Panc1 (cell line): ENCODE measurements at regions of chr3 and their contacts with region 1.

Region 1: DNA sequence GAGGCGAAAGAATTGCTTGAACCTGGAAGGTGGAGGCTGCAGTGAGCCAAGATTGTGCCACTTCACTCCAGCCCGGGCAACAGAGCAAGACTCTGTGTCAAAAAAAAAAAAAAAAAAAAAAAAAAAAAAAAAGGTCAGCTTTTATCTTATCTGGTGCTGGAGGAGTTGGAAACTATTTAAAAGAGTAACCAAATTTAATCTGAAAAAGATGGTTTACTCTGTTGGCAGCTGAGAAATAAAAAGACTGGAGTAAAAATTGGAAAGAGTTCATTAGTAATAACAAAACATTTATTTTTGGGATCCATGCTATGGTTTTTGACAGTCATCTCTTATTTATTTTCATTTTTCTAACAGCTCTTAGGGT is 332.8 kb downstream of the PTPRG start:
- DNase-seq: no peak
- ATAC-seq: no peak
- H3K4me3 ChIP-seq: no peak overlapping the region
- H3K27ac ChIP-seq: no peak overlapping the region
- H3K4me1 ChIP-seq: no peaks in the 10 kb centered on the region
- H3K27me3 ChIP-seq: no peaks in the 10 kb centered on the region
- CTCF ChIP-seq: no peak

Region 2: DNA sequence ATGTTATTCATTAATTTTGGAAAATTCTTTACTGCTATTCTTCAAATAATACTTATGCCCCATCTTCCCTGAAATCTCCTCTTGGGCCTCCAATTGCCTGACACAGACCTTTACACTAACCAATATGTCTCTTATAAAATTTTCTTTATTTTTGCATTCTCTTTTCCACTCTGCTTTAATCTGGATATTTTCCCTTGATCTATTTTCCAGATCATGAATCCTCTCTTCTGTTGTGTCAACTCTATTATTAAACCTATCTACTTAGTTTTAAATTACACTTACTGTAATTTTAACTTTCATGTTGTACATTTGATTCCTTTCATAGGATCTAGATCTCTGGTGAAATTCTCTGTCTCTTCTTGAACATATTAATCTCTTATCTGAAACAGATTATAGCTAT is 921.6 kb before region 1 on chr3:
- CTCF ChIA-PET with region 1: no interaction called
- POLR2A ChIA-PET with region 1: interaction called, 15 read pairs
- in situ Hi-C with region 1: no loop called
- intact Hi-C with region 1: no loop called
- DNase-seq: no peak
- ATAC-seq: no peak
- H3K4me3 ChIP-seq: no peak overlapping the region
- H3K27ac ChIP-seq: no peak overlapping the region
- H3K4me1 ChIP-seq: no peaks in the 10 kb centered on the region
- H3K27me3 ChIP-seq: no peaks in the 10 kb centered on the region
- CTCF ChIP-seq: no peak